ENCODE measurements at regions of chr5 and their contacts with region 1.

Region 1: GRCh38 chr5:149636851-149637246 is 55.6 kb downstream of the ARHGEF37 start:
- DNase-seq: peak; percentile 77

Region 2: GRCh38 chr5:149448831-149449714 is 187.8 kb before region 1 on chr5:
- in situ Hi-C with region 1: no loop called
- DNase-seq: peak; percentile 48

Region 3: GRCh38 chr5:149834246-149834855 is 197.5 kb after region 1 on chr5:
- in situ Hi-C with region 1: loop called (anchors 10 kb)
- DNase-seq: peak; percentile 71

Region 4: GRCh38 chr5:149990518-149991376 is 353.9 kb after region 1 on chr5:
- in situ Hi-C with region 1: loop called (anchors 10 kb)
- DNase-seq: peak; percentile 75